HEK293 (cell line): ENCODE measurements at regions of chr9 and their contacts with region 1.

Region 1: GRCh38 chr9:36317764-36318163 is 59.5 kb upstream of the GNE start:
- H3K4me3 ChIP-seq: no peak overlapping the region
- H3K27ac ChIP-seq: no peak overlapping the region
- H3K4me1 ChIP-seq: peaks cover 5% of the 10 kb centered on the region; the same call in 1 of the 2 replicates
- CTCF ChIP-seq: no peak

Region 2: GRCh38 chr9:36250079-36250478 is 67.7 kb before region 1 on chr9:
- CTCF ChIA-PET with region 1: interaction called, 10 read pairs
- POLR2A ChIA-PET with region 1: no interaction called
- H3K4me3 ChIP-seq: no peak overlapping the region
- H3K27ac ChIP-seq: no peak overlapping the region
- H3K4me1 ChIP-seq: no peaks in the 10 kb centered on the region
- CTCF ChIP-seq: no peak